CD14-positive monocyte (primary cell): ENCODE measurements at regions of chr17 and their contacts with region 1.

Region 1: DNA sequence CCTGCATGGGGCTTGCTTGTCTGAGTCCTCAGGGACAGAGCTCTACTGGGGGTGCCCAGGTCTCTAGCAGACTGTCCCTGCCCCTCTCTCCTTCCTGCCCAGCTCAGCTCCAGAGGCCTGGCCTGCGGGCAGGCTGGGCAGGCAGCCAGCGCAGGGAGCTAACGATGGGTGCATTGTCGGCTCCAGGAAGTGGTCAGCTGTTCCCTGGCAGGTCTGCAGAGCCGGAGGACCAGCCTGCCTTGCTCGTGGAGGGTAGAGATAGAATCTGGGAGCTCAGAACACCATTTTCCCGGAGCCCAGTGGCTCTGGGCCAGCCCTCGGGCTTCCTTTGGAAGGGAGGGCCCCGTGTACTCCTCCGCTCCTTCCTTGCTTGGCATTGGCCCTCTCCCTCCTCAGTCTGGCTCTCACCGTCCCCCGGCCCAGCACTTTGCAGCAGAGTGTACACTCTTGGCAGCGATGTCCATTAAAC is 189.6 kb downstream of the RAB11FIP4 start:
- DNase-seq: peak in 1 of 3 donors; percentile 47
- H3K4me3 ChIP-seq: peak overlapping the region in 1 of 3 experiments; percentile 49
- H3K4me3 Mint-ChIP-seq: peak overlapping the region in 1 of 2 donors; percentile 67
- H3K27ac ChIP-seq: peak overlapping the region; percentile 93 to 95
- H3K27ac Mint-ChIP-seq: peak overlapping the region; percentile 93 to 98 (median 97)
- H3K4me1 ChIP-seq: peaks cover 65 to 71% of the 10 kb centered on the region in 2 donors
- H3K4me1 Mint-ChIP-seq: peaks cover 68% of the 10 kb centered on the region
- H3K27me3 ChIP-seq: no peaks in the 10 kb centered on the region
- H3K27me3 Mint-ChIP-seq: peaks cover 0 to 1% (median 0%) of the 10 kb centered on the region in 3 donors
- CTCF ChIP-seq: no peak

Region 2: GRCh38 chr17:31494259-31495021 is 86.6 kb before region 1 on chr17:
- intact Hi-C with region 1: loop called in 1 of 2 experiments (anchors 10 kb)
- DNase-seq: peak; percentile 89 to 92 (median 92)
- H3K4me3 ChIP-seq: peak overlapping the region in 1 of 3 experiments; percentile 70
- H3K4me3 Mint-ChIP-seq: peak overlapping the region; percentile 69 to 88
- H3K27ac ChIP-seq: peak overlapping the region; percentile 92 to 97
- H3K27ac Mint-ChIP-seq: peak overlapping the region; percentile 96 to 99 (median 98)
- H3K4me1 ChIP-seq: peaks cover 64 to 71% of the 10 kb centered on the region in 2 donors
- H3K4me1 Mint-ChIP-seq: peaks cover 66% of the 10 kb centered on the region
- H3K27me3 ChIP-seq: peaks cover 0 to 4% of the 10 kb centered on the region in 2 donors
- H3K27me3 Mint-ChIP-seq: peaks cover 3 to 12% (median 8%) of the 10 kb centered on the region in 3 donors
- CTCF ChIP-seq: no peak

Region 3: GRCh38 chr17:31549525-31550388 is 31.3 kb before region 1 on chr17:
- intact Hi-C with region 1: no loop called
- DNase-seq: peak; percentile 82 to 88 (median 87)
- H3K4me3 ChIP-seq: peak overlapping the region; percentile 64 to 93 (median 90)
- H3K4me3 Mint-ChIP-seq: peak overlapping the region; percentile 87 to 91
- H3K27ac ChIP-seq: peak overlapping the region; percentile 65 to 90
- H3K27ac Mint-ChIP-seq: peak overlapping the region; percentile 76 to 93 (median 88)
- H3K4me1 ChIP-seq: peaks cover 17 to 19% of the 10 kb centered on the region in 2 donors
- H3K4me1 Mint-ChIP-seq: peaks cover 25% of the 10 kb centered on the region
- H3K27me3 ChIP-seq: no peaks in the 10 kb centered on the region
- H3K27me3 Mint-ChIP-seq: peaks cover 3 to 5% (median 4%) of the 10 kb centered on the region in 3 donors
- CTCF ChIP-seq: no peak

Region 4: GRCh38 chr17:31678431-31678830 is 97.4 kb after region 1 on chr17:
- intact Hi-C with region 1: loop called in 1 of 2 experiments (anchors 5 kb)
- DNase-seq: peak; percentile 40 to 84 (median 53)
- H3K4me3 ChIP-seq: no peak overlapping the region
- H3K4me3 Mint-ChIP-seq: no peak overlapping the region
- H3K27ac ChIP-seq: no peak overlapping the region
- H3K27ac Mint-ChIP-seq: peak overlapping the region in 1 of 7 donors; percentile 81
- H3K4me1 ChIP-seq: peaks cover 10 to 11% of the 10 kb centered on the region in 2 donors
- H3K4me1 Mint-ChIP-seq: peaks cover 12% of the 10 kb centered on the region
- H3K27me3 ChIP-seq: peaks cover 0 to 2% of the 10 kb centered on the region in 2 donors
- H3K27me3 Mint-ChIP-seq: peaks cover 9 to 30% (median 11%) of the 10 kb centered on the region in 3 donors
- CTCF ChIP-seq: no peak